Right ventricle myocardium superior (tissue), 1 donor: ENCODE measurements at regions of chr15 and their contacts with region 1.

Region 1: GRCh38 chr15:40108855-40109735 is at the start of gene BMF:
- DNase-seq: peak; percentile 100
- ATAC-seq: peak; percentile 88
- total RNA-seq, gene BMF: 3.4 TPM

Region 2: DNA sequence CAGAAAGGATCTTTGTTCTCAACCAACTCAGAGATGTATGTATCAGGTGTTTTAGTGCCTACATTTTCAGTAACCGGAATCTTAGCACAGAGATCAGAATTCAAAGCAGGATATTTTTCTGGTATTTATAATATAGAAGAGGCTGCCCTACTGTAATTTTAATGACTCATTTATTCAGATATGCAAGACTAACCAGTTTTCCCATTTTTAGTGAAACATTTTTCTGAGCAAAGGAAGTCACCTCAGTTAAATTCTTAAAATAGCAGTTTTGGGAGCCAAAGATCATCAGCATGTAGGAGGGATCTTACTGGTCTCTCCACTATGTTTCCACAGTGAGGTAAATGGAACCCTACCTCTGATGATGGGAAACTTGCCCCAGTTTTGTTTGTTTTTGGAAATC is 112.1 kb before region 1 on chr15:
- intact Hi-C with region 1: no loop called
- DNase-seq: no peak
- ATAC-seq: no peak

Region 3: GRCh38 chr15:40044717-40045571 is 64.2 kb before region 1 on chr15:
- intact Hi-C with region 1: loop called (anchors 5 kb)
- DNase-seq: peak; percentile 94
- ATAC-seq: peak; percentile 93

Region 4: DNA sequence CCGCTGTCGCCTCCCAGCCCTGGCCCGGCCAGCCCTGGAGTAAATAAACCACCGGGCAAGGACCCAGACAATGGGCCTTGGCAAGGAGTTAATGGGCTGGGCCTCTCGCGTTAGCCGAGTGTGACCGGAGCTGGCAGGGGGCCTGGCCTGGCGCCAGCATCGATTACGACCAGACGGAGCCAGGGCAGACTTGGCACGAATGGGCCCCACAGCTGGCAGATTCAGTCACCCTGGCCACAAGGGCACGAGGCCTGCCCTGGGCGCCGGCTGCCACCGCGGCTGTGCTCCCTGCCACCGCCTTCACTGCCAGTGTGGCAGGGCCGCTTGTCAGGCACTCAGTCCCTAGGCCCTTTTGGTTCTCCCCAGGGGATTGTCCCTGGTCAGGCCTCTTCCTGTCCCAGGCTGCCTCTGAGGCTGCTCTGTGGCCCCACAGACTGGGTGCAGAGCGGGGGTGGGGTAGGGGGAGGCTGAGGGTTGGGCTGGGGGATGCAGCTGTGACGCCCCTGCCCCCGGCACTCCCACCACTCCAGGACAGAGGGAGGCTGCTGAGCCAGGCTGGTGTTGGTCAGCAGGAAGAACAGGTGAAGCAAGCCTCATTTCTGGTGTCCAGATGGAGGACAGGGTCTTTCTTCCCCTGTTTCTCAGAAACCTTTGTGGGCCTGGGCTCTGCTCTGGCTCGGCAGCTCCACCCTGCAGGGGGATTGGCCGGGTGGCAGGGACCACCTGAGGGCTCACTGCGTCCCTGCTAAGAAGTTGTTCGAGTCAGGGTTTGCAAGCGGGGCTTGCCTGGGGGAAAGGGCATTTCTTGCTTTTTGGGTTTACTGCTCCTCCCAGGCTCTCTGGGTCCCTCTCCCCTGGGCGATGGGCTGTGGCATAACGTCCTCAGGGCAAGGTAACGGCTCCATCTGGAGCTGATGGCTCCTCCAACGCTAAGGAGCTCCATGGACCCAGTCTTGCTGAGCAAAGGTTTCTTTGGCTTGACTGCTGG is 39.6 kb before region 1 on chr15:
- intact Hi-C with region 1: loop called (anchors 5 kb)
- DNase-seq: peak; percentile 96
- ATAC-seq: peak; percentile 95